ENCODE measurements at regions of chr6 and their contacts with region 1.

Region 1: DNA sequence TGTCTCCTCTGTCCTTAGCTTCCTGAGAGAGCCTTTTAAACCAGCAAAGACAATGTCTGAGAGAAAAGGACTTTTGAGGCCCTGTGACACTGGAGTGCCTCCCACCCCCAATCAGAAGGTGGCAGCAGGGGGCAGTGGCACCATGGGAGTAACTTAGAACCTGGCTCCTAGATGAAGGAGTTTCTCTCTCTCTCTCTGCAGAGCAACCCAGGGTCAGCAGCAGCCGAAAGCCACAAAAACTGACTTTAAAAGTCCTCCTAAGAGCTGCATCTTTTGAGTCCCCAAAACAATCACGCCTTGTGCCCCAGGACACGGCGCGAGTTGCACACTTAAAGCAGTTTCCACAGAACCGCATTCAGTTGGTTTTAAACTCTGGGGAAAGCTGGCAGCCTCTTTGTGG is 5.3 kb upstream of the TCP11 start:
- DNase-seq: peak in 3 of 4 experiments; percentile 28 to 50 (median 38)
- ATAC-seq: peak; percentile 76
- H3K4me3 ChIP-seq: no peak overlapping the region
- H3K27ac ChIP-seq: no peak overlapping the region
- H3K4me1 ChIP-seq: peaks cover 0 to 3% of the 10 kb centered on the region in 2 experiments; a peak in 2 of 5 replicates
- H3K27me3 ChIP-seq: peaks cover 22 to 29% of the 10 kb centered on the region in 2 experiments
- CTCF ChIP-seq: peak; percentile 69 to 79 (median 71)
- EP300 ChIP-seq: no peak
- POLR2A ChIP-seq: no peak
- RAD21 ChIP-seq: peak; percentile 42 to 73

Region 2: GRCh38 chr6:35202066-35202546 is 55.7 kb after region 1 on chr6:
- CTCF ChIA-PET with region 1: interaction called, 9 read pairs
- POLR2A ChIA-PET with region 1: interaction called, 4 read pairs
- in situ Hi-C with region 1: no loop called
- intact Hi-C with region 1: loop called (anchors 1 kb)
- DNase-seq: no peak
- ATAC-seq: no peak
- H3K4me3 ChIP-seq: no peak overlapping the region
- H3K27ac ChIP-seq: no peak overlapping the region
- H3K4me1 ChIP-seq: no peaks in the 10 kb centered on the region
- H3K27me3 ChIP-seq: peaks cover 31 to 50% of the 10 kb centered on the region in 2 experiments
- CTCF ChIP-seq: no peak
- EP300 ChIP-seq: no peak
- POLR2A ChIP-seq: no peak
- RAD21 ChIP-seq: no peak

Measured in K562 (cell line).